ENCODE measurements at regions of chr14 and their contacts with region 1.

Region 1: GRCh38 chr14:20970983-20971704 is 15.9 kb downstream of the RNASE2 start:
- DNase-seq: peak; percentile 84
- ATAC-seq: peak; percentile 90
- H3K4me3 Mint-ChIP-seq: peak overlapping the region; percentile 83
- H3K27ac Mint-ChIP-seq: peak overlapping the region; percentile 22
- H3K4me1 Mint-ChIP-seq: peaks cover 12% of the 10 kb centered on the region
- H3K27me3 Mint-ChIP-seq: peaks cover 51% of the 10 kb centered on the region

Region 2: DNA sequence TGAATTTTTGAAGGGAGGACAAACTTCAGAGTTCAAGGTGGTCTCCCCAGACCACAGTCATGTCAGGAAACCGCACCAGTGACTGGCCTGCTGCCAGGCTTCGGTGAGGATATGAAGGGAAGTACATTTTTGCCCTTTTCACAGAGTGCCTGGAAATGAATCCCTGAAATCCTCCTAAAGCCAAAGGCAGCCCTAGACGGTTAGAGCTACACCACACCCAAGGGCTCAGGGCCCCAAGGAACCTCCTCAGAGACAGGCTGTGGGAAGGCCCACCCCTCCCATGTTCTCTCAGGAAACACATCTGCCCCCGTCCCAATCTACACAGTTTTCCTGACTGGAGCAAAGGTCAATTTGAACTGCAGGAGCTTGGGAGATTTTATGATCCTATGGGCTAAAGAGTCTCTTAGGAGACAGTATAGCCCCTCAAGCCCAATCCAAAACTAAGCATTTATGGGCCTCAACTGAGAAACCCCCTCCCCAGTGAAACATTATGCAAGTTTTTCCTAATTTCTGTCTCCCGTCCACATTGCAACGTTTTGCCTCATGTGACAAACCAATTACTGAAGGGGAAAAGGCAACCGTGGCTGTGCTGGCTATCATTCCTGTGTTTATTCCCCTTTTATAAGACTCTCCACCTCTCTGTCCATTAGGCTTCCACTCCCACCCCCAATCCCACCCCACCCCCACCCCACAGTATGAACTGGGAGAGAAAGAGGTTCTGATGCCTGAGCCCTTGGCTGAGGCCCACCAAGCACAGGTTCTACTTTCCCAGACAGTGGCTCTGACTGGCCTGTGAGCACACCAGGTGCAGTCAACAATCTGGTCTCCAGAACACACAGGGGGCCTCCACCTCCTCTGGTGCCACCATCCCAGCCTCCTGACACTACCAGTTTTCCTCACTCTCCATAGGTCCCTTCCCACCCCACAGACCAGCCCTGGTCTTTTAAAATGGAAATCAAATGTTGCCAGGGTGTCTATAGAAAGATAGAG is 158.9 kb before region 1 on chr14:
- CTCF ChIA-PET with region 1: no interaction called
- DNase-seq: no peak
- ATAC-seq: no peak
- H3K4me3 Mint-ChIP-seq: no peak overlapping the region
- H3K27ac Mint-ChIP-seq: no peak overlapping the region
- H3K4me1 Mint-ChIP-seq: no peaks in the 10 kb centered on the region
- H3K27me3 Mint-ChIP-seq: peaks cover 19% of the 10 kb centered on the region

Region 3: GRCh38 chr14:20855652-20856291 is 115.4 kb before region 1 on chr14:
- CTCF ChIA-PET with region 1: interaction called, 67 read pairs
- DNase-seq: peak; percentile 69
- ATAC-seq: peak; percentile 86
- H3K4me3 Mint-ChIP-seq: no peak overlapping the region
- H3K27ac Mint-ChIP-seq: no peak overlapping the region
- H3K4me1 Mint-ChIP-seq: no peaks in the 10 kb centered on the region
- H3K27me3 Mint-ChIP-seq: peaks cover 43% of the 10 kb centered on the region

Region 4: GRCh38 chr14:20956376-20956976 is 14.7 kb before region 1 on chr14:
- CTCF ChIA-PET with region 1: interaction called, 35 read pairs
- DNase-seq: no peak
- ATAC-seq: peak; percentile 34
- H3K4me3 Mint-ChIP-seq: no peak overlapping the region
- H3K27ac Mint-ChIP-seq: no peak overlapping the region
- H3K4me1 Mint-ChIP-seq: peaks cover 35% of the 10 kb centered on the region
- H3K27me3 Mint-ChIP-seq: peaks cover 35% of the 10 kb centered on the region

Region 5: GRCh38 chr14:20989572-20990551 is 18.7 kb after region 1 on chr14 and contains the start of gene METTL17:
- CTCF ChIA-PET with region 1: interaction called, 27 read pairs
- DNase-seq: peak; percentile 95
- ATAC-seq: peak; percentile 97
- H3K4me3 Mint-ChIP-seq: peak within 1 kb of the TSS; percentile 91
- H3K27ac Mint-ChIP-seq: peak within 1 kb of the TSS; percentile 85
- H3K4me1 Mint-ChIP-seq: peaks cover 46% of the 10 kb centered on the region
- H3K27me3 Mint-ChIP-seq: peaks cover 2% of the 10 kb centered on the region
- total RNA-seq, gene METTL17: 102 to 111 TPM

Region 6: GRCh38 chr14:21063479-21063878 is 92.3 kb after region 1 on chr14:
- CTCF ChIA-PET with region 1: no interaction called
- DNase-seq: no peak
- ATAC-seq: no peak
- H3K4me3 Mint-ChIP-seq: no peak overlapping the region
- H3K27ac Mint-ChIP-seq: no peak overlapping the region
- H3K4me1 Mint-ChIP-seq: peaks cover 2% of the 10 kb centered on the region
- H3K27me3 Mint-ChIP-seq: peaks cover 76% of the 10 kb centered on the region

Region 7: DNA sequence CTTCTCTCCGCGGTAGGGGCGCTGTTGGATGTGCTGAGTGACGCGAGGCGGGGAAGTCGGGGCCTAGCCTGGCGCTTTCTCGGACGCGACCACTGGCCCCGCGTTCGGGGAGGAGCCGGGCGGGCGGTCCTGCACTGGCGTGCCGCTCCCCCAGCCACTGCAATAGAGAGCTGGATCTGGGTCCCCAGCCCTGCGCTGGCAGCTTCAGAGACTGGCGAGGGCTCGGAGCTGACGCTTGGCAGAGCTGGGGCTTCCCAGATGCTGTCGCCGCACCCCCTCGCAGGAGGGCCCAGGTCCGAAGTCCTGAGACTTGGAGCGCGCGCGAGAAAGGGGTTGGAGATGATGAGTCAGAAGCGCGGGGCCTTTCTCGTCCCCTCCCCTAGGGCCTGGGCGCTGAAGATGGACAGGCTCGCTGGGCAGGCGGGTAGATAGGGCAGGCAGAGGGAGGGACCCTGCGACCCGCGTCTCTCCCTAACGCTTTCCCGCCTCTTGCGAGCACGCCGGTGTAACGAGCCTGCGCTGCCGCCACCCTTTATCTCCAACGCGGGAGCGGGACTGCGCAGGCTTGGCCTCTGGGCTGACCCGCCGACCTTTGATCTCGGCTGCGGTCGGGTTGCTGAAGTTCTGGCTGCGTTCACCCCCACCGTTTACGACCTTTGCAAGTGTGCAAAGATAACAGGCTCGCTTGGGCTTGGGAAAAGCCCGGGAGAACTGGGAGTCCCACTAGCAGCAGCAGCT is 132.7 kb after region 1 on chr14:
- CTCF ChIA-PET with region 1: interaction called, 12 read pairs
- DNase-seq: peak; percentile 98
- ATAC-seq: peak; percentile 90
- H3K4me3 Mint-ChIP-seq: peak overlapping the region; percentile 97
- H3K27ac Mint-ChIP-seq: peak overlapping the region; percentile 98
- H3K4me1 Mint-ChIP-seq: peaks cover 49% of the 10 kb centered on the region
- H3K27me3 Mint-ChIP-seq: peaks cover 11% of the 10 kb centered on the region

Measured in activated CD8-positive, alpha-beta memory T cell treated with anti-CD3 and anti-CD28 coated beads, Interleukin-2, amount 10 ng/mL, durations not matched to agents 7 days and 5 days (primary cell).